ENCODE measurements at regions of chr18 and their contacts with region 1.

Region 1: GRCh38 chr18:50967714-50968661 is at the start of gene ELAC1:
- DNase-seq: peak; percentile 46
- ATAC-seq: peak; percentile 97
- H3K4me3 ChIP-seq: peak within 1 kb of the TSS; percentile 69 to 92
- H3K27ac ChIP-seq: peak within 1 kb of the TSS; percentile 90
- H3K4me1 ChIP-seq: peaks cover 16 to 27% of the 10 kb centered on the region in 2 experiments; a peak in 3 of 4 replicates
- H3K27me3 ChIP-seq: no peaks in the 10 kb centered on the region
- CTCF ChIP-seq: no peak
- POLR2A ChIP-seq: peak; percentile 80
- RAD21 ChIP-seq: no peak
- total RNA-seq, gene ELAC1: 8.6 TPM

Region 2: GRCh38 chr18:50878345-50879301 is 89.4 kb before region 1 on chr18 and contains the start of gene ME2:
- CTCF ChIA-PET with region 1: no interaction called
- POLR2A ChIA-PET with region 1: interaction called, 7 read pairs
- RAD21 ChIA-PET with region 1: no interaction called
- intact Hi-C with region 1: loop called (anchors 5 kb)
- DNase-seq: peak; percentile 61
- ATAC-seq: peak; percentile 96
- H3K4me3 ChIP-seq: peak within 1 kb of the TSS; percentile 72 to 73
- H3K27ac ChIP-seq: peak within 1 kb of the TSS; percentile 81
- H3K4me1 ChIP-seq: peaks cover 10 to 24% of the 10 kb centered on the region in 2 experiments
- H3K27me3 ChIP-seq: no peaks in the 10 kb centered on the region
- CTCF ChIP-seq: no peak
- POLR2A ChIP-seq: peak; percentile 88
- RAD21 ChIP-seq: no peak
- total RNA-seq, gene ME2: 49.0 TPM

Region 3: GRCh38 chr18:50902797-50903196 is 65.2 kb before region 1 on chr18:
- CTCF ChIA-PET with region 1: no interaction called
- POLR2A ChIA-PET with region 1: no interaction called
- RAD21 ChIA-PET with region 1: no interaction called
- intact Hi-C with region 1: no loop called
- DNase-seq: no peak
- ATAC-seq: no peak
- H3K4me3 ChIP-seq: no peak overlapping the region
- H3K27ac ChIP-seq: no peak overlapping the region
- H3K4me1 ChIP-seq: no peaks in the 10 kb centered on the region
- H3K27me3 ChIP-seq: no peaks in the 10 kb centered on the region
- CTCF ChIP-seq: no peak
- POLR2A ChIP-seq: no peak
- RAD21 ChIP-seq: no peak

Region 4: GRCh38 chr18:51029694-51030536 is 61.9 kb after region 1 on chr18 and contains the start of gene SMAD4:
- CTCF ChIA-PET with region 1: no interaction called
- POLR2A ChIA-PET with region 1: interaction called, 3 read pairs
- RAD21 ChIA-PET with region 1: no interaction called
- intact Hi-C with region 1: loop called (anchors 5 kb)
- DNase-seq: peak; percentile 86
- ATAC-seq: peak; percentile 87
- H3K4me3 ChIP-seq: peak within 1 kb of the TSS; percentile 67 to 68
- H3K27ac ChIP-seq: peak within 1 kb of the TSS; percentile 98
- H3K4me1 ChIP-seq: peaks cover 14 to 31% of the 10 kb centered on the region in 2 experiments; a peak in 3 of 4 replicates
- H3K27me3 ChIP-seq: no peaks in the 10 kb centered on the region
- CTCF ChIP-seq: no peak
- POLR2A ChIP-seq: peak; percentile 83
- RAD21 ChIP-seq: no peak
- total RNA-seq, gene SMAD4: 96.3 TPM

Region 5: DNA sequence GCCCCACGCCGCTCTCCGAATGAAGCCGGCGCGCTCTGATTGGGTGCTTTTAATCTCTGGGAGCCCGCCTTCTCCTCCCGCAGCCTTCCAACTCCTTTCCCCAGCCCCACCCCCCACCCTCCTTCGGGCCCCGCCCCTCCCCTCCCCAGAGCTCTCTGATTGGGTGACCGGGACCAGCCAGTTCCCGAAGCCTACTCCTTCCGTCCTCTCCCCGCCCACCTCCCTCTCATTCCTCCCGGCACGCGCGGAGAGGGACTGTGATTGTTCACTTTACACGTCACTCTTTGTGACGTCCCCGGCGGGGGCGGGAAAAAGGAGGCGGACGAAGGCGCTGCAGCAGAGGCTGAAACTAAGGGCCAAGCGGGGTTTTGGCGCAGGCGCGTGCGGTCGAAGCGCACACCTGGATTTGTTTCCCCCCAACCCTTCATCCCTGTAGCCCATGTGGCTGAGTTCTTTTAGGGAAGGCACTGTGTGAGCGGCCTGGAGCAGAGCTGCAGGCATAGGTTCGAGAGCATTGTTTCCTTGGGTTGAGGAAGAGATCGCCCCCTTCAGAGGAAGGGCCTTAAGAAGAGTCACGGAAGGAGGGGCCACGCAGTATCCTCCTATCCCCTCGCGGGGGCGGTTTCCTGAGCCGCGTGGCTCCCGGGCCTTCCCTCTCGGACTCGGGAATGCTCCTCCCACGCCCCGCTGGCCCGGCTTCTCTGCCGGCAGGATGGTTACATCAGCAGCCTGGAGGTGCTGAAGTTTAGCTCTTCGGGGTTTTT is 229.9 kb after region 1 on chr18 and contains the start of gene MEX3C:
- CTCF ChIA-PET with region 1: no interaction called
- POLR2A ChIA-PET with region 1: no interaction called
- RAD21 ChIA-PET with region 1: no interaction called
- intact Hi-C with region 1: loop called (anchors 5 kb)
- DNase-seq: peak; percentile 97
- ATAC-seq: peak; percentile 89
- H3K4me3 ChIP-seq: peak within 1 kb of the TSS; percentile 83 to 98
- H3K27ac ChIP-seq: peak within 1 kb of the TSS; percentile 88
- H3K4me1 ChIP-seq: peaks cover 8 to 26% of the 10 kb centered on the region in 2 experiments; a peak in 3 of 4 replicates
- H3K27me3 ChIP-seq: no peaks in the 10 kb centered on the region
- CTCF ChIP-seq: 0 out of 6 replicates have a peak, but pooled peaks of 2 of the 3 experiments have one; percentile 3 to 12
- POLR2A ChIP-seq: peak; percentile 84
- RAD21 ChIP-seq: no peak
- total RNA-seq, gene MEX3C: 45.0 TPM